ENCODE measurements at regions of chr17 and their contacts with region 1.

Region 1: GRCh38 chr17:35119368-35120165 is at the start of gene RAD51D:
- DNase-seq: peak; percentile 95
- H3K4me3 ChIP-seq: peak within 1 kb of the TSS; percentile 73 to 78
- H3K27ac ChIP-seq: peak within 1 kb of the TSS; percentile 17 to 48; a peak in 1 of 4 replicates
- H3K4me1 ChIP-seq: peaks cover 0 to 16% of the 10 kb centered on the region in 2 experiments; a peak in 1 of 4 replicates
- H3K27me3 ChIP-seq: no peaks in the 10 kb centered on the region
- CTCF ChIP-seq: peak; percentile 86
- EP300 ChIP-seq: no peak
- RAD21 ChIP-seq: peak; percentile 81
- polyA plus RNA-seq, gene RAD51D: 11.6 and 13.7 TPM in 2 replicates

Region 2: DNA sequence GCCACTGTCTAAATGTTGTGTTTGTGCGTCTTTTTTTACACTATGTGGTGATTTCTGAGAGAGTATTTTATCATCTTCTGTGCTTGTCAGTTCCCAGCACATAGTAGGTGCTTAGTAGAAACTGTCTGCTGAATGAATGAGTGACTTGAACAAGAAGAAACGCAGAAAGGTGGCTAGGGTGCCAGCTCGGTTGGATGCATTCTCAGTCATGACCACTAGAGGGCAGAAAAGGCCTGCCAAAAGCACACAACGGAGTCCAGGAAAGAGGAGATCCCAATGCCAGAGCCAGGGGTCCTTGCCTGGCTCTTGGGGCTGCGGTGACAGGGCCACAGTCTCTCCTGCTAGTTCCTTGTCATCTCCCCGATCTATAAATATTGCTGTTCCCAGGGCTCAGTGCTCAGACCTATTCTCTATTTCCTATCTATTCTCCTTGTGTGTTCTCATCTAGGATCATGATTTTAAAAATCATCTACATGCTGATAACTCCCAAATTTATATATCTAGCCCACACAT is 699.3 kb before region 1 on chr17:
- CTCF ChIA-PET with region 1: interaction called, 20 read pairs
- POLR2A ChIA-PET with region 1: no interaction called
- DNase-seq: peak; percentile 85
- H3K4me3 ChIP-seq: no peak overlapping the region
- H3K27ac ChIP-seq: no peak overlapping the region
- H3K4me1 ChIP-seq: no peaks in the 10 kb centered on the region
- H3K27me3 ChIP-seq: peaks cover 9% of the 10 kb centered on the region; the same call in 1 of the 2 replicates
- CTCF ChIP-seq: peak; percentile 89
- EP300 ChIP-seq: no peak
- RAD21 ChIP-seq: peak; percentile 97

Region 3: GRCh38 chr17:34542700-34543336 is 576.7 kb before region 1 on chr17:
- CTCF ChIA-PET with region 1: interaction called, 21 read pairs
- POLR2A ChIA-PET with region 1: no interaction called
- DNase-seq: peak; percentile 47
- H3K4me3 ChIP-seq: peak overlapping the region in 1 of 2 experiments; percentile 46; a peak in 1 of 4 replicates
- H3K27ac ChIP-seq: no peak overlapping the region
- H3K4me1 ChIP-seq: no peaks in the 10 kb centered on the region
- H3K27me3 ChIP-seq: no peaks in the 10 kb centered on the region; the same call in 1 of the 2 replicates
- CTCF ChIP-seq: peak; percentile 94
- EP300 ChIP-seq: no peak
- RAD21 ChIP-seq: peak; percentile 77

Region 4: GRCh38 chr17:34998205-34998604 is 121.4 kb before region 1 on chr17:
- CTCF ChIA-PET with region 1: interaction called, 32 read pairs
- POLR2A ChIA-PET with region 1: no interaction called
- DNase-seq: peak; percentile 70
- H3K4me3 ChIP-seq: no peak overlapping the region; a peak in 1 of 4 replicates
- H3K27ac ChIP-seq: peak overlapping the region in 1 of 2 experiments; percentile 31; a peak in 1 of 4 replicates
- H3K4me1 ChIP-seq: peaks cover 4 to 22% of the 10 kb centered on the region in 2 experiments; a peak in 2 of 4 replicates
- H3K27me3 ChIP-seq: no peaks in the 10 kb centered on the region
- CTCF ChIP-seq: peak; percentile 76
- EP300 ChIP-seq: no peak
- RAD21 ChIP-seq: peak; percentile 82

Region 5: DNA sequence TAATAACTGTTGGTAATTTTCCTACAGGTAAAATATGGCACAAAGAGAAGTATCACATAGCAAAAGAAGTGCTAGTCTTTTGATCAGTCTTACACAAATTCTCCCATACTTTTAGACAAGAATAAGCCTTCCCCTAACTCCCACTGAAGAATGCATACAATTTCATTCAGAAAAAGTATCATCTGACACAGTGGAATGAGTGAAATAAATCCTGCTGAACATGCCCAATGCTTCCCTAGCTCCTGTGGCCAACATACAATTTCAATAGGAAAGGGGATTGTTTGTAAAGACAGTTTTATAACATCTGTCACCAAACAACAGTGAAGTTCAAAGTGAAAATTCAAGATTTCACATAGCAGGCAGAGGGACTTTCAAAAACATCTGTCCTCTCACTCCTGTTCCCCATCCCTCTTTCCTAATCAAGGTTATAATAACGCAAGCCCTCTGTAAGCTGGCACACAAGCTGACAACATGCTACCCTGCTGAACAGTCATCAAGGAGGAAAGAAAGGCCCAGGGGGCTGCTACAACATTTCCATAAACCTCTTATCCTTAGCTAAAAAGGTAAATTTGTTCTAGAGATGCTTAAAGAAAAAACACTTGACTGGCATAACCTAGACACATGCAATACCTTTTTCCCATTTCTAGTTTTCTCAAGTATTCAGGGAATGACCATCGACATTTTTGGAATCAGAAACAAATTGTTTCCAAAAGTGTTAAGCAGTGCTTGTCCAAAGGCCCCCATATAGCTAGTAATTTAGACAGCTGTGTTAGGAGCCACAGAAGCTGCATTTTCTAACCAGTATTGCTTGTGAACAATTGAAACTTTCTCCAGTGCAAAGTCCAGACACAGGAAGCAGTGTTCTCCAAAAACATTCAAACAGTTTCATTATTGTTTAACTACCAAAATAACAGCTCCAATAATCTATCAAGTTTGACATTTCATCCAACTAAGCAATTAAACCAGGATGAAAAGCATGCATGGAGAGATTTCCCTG is 44.6 kb before region 1 on chr17:
- CTCF ChIA-PET with region 1: no interaction called
- POLR2A ChIA-PET with region 1: no interaction called
- DNase-seq: no peak
- H3K4me3 ChIP-seq: no peak overlapping the region
- H3K27ac ChIP-seq: no peak overlapping the region
- H3K4me1 ChIP-seq: no peaks in the 10 kb centered on the region; a peak in 1 of 4 replicates
- H3K27me3 ChIP-seq: no peaks in the 10 kb centered on the region
- CTCF ChIP-seq: no peak
- EP300 ChIP-seq: no peak
- RAD21 ChIP-seq: no peak

Region 6: GRCh38 chr17:35141681-35142466 is 22.3 kb after region 1 on chr17 and contains the start of gene NLE1:
- CTCF ChIA-PET with region 1: interaction called, 10 read pairs
- POLR2A ChIA-PET with region 1: interaction called, 4 read pairs
- DNase-seq: peak; percentile 94
- H3K4me3 ChIP-seq: peak within 1 kb of the TSS; percentile 91 to 99
- H3K27ac ChIP-seq: peak within 1 kb of the TSS in 1 of 2 experiments; percentile 47; a peak in 1 of 4 replicates
- H3K4me1 ChIP-seq: peaks cover 0 to 3% of the 10 kb centered on the region in 2 experiments; a peak in 1 of 4 replicates
- H3K27me3 ChIP-seq: no peaks in the 10 kb centered on the region; the same call in 1 of the 2 replicates
- CTCF ChIP-seq: peak; percentile 83
- EP300 ChIP-seq: peak; percentile 14 to 24; a peak in 1 of 4 replicates
- RAD21 ChIP-seq: 0 out of 2 replicates have a peak, but pooled peaks have one; percentile 8
- polyA plus RNA-seq, gene NLE1: 22.1 and 25.3 TPM in 2 replicates

Region 7: DNA sequence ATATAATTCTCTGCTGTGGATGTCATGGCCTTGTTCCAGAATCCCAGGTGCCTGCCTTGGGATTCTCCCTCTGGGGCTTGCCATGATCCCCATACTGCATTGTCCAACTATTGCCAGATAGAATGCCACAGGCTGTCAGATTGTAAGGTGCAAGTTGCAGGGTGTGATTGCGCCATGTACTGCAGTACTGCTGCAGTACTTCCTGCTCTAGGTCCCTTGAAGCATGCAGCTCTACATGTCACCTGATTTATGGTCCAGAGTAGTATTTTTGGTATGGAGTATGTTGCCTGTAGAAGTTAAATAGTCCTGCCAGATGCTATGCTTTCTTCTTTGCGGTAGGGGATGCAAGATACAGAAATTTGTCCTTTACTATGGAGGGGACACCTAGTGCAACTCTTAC is 116.3 kb after region 1 on chr17:
- CTCF ChIA-PET with region 1: no interaction called
- POLR2A ChIA-PET with region 1: no interaction called
- DNase-seq: no peak
- H3K4me3 ChIP-seq: no peak overlapping the region
- H3K27ac ChIP-seq: no peak overlapping the region
- H3K4me1 ChIP-seq: no peaks in the 10 kb centered on the region
- H3K27me3 ChIP-seq: peaks cover 32% of the 10 kb centered on the region; the same call in 1 of the 2 replicates
- CTCF ChIP-seq: no peak
- EP300 ChIP-seq: no peak
- RAD21 ChIP-seq: no peak

Measured in SK-N-SH (cell line).